ENCODE measurements at regions of chr21 and their contacts with region 1.

Region 1: GRCh38 chr21:41611941-41612606 is 104.1 kb upstream of the TMPRSS2 start:
- DNase-seq: no peak
- H3K4me3 ChIP-seq: peak overlapping the region in 1 of 4 donors; percentile 32
- H3K27ac ChIP-seq: peak overlapping the region; percentile 62 to 82 (median 72)
- H3K4me1 ChIP-seq: peaks cover 22 to 47% (median 40%) of the 10 kb centered on the region in 4 donors
- H3K27me3 ChIP-seq: peaks cover 0 to 16% (median 0%) of the 10 kb centered on the region in 4 donors
- CTCF ChIP-seq: no peak
- EP300 ChIP-seq: no peak
- POLR2A ChIP-seq: no peak

Region 2: GRCh38 chr21:41777951-41778874 is 166.1 kb after region 1 on chr21:
- intact Hi-C with region 1: loop called (anchors 1 kb)
- DNase-seq: peak; percentile 97
- H3K4me3 ChIP-seq: peak overlapping the region in 1 of 4 donors; percentile 0
- H3K27ac ChIP-seq: no peak overlapping the region
- H3K4me1 ChIP-seq: peaks cover 8 to 15% (median 11%) of the 10 kb centered on the region in 4 donors
- H3K27me3 ChIP-seq: peaks cover 0 to 87% (median 20%) of the 10 kb centered on the region in 4 donors
- CTCF ChIP-seq: peak; percentile 90 to 99 (median 90)
- EP300 ChIP-seq: no peak
- POLR2A ChIP-seq: no peak